Kidney (tissue), 22 donors: ENCODE measurements at regions of chr16 and their contacts with region 1.

Region 1: DNA sequence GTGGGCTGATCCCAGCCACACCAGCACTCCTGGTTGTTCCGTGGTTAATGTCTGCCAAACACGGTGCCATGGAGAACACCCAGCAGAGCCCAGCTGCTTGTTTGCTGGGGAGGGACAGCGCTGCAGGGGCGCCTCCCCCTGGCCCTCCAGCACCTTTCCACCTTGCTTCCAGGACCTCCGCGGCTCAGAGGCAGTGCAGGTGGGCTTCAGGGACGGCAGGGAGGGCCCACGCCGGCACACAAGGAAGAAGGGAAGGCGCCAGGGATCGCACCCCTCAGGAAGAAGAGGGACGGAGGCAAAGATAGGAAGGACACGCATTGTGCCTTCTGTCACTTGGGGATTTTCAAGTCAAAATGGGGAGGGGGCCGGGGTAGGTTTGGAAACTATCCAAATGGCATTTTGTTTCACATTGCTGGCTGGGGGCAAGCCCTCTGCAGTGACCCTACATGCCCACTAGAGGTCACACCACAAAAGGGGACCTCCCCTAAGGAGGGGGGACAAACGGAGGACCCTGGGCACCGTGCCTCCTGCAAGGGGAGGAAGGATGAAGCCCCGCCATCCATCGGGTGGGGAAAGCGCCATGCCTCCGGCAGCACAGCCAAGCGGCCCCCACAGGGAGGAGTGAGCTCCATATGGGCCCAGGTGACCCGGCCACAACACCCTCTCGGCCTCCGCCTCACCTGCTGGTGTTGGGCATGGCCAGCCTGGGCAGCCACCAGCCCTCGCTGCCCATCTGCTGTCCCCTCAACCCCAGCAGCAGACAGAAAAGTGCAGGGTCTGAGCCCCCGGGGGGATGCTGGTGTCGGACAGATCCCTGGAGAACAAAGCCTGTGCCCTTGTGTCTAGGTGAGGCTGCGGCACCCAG is 7.5 kb upstream of the C16orf95 start:
- DNase-seq: peak; percentile 29 to 74 (median 61)
- H3K4me3 ChIP-seq: no peak overlapping the region
- H3K27ac ChIP-seq: no peak overlapping the region
- H3K4me1 ChIP-seq: no peaks in the 10 kb centered on the region
- H3K27me3 ChIP-seq: no peaks in the 10 kb centered on the region
- CTCF ChIP-seq: peak; percentile 64

Region 2: GRCh38 chr16:87363771-87364455 is 39.3 kb after region 1 on chr16:
- intact Hi-C with region 1: no loop called
- DNase-seq: peak in 2 of 5 donors; percentile 28 to 50
- H3K4me3 ChIP-seq: no peak overlapping the region
- H3K27ac ChIP-seq: no peak overlapping the region
- H3K4me1 ChIP-seq: peaks cover 0 to 5% (median 0%) of the 10 kb centered on the region in 3 donors
- H3K27me3 ChIP-seq: no peaks in the 10 kb centered on the region
- CTCF ChIP-seq: no peak

Region 3: GRCh38 chr16:87375426-87376135 is 50.9 kb after region 1 on chr16:
- intact Hi-C with region 1: loop called (anchors 10 kb)
- DNase-seq: no peak
- H3K4me3 ChIP-seq: no peak overlapping the region
- H3K27ac ChIP-seq: no peak overlapping the region
- H3K4me1 ChIP-seq: peaks cover 0 to 3% (median 0%) of the 10 kb centered on the region in 3 donors
- H3K27me3 ChIP-seq: no peaks in the 10 kb centered on the region
- CTCF ChIP-seq: no peak